ENCODE measurements at regions of chr9 and their contacts with region 1.

Region 1: DNA sequence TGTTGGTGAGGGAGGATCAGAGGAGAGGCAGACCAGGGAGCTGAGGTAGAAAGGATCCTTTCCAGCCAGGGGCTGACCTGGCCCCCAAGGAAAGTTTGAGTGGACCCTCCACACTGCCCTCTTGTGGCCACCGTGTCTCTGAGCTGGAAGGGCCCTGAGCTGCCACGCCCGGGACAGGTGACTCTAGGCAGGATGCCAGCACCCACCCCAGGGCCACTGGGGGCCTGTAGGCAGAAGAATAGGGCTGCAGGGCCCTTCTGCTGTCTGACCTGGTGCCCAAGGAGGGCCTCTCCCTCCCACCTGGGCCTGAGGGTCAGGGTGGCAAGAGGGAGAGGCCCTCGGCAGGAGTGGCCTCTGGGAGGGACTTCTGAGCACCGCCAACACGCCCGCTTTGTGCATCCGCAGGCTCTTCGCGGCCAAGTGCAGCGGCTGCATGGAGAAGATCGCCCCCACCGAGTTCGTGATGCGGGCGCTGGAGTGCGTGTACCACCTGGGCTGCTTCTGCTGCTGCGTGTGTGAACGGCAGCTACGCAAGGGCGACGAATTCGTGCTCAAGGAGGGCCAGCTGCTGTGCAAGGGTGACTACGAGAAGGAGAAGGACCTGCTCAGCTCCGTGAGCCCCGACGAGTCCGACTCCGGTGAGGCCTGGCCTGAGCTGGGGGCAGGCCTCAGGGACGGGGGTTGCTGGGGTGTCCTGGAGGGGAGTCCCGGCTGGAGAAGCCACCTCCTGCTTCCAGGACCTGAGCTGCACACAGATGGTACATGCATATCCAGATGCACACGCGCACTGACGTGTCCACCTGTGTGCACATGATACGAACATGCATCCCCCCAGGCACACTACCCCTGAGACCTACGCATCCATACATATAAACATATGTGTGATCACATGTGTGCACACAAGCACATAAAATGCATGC is 77.0 kb downstream of the LMX1B start:
- DNase-seq: no peak
- ATAC-seq: peak; percentile 82
- H3K4me3 ChIP-seq: no peak overlapping the region
- H3K27ac ChIP-seq: no peak overlapping the region
- H3K4me1 ChIP-seq: no peaks in the 10 kb centered on the region
- H3K27me3 ChIP-seq: no peaks in the 10 kb centered on the region
- CTCF ChIP-seq: peak; percentile 82

Region 2: DNA sequence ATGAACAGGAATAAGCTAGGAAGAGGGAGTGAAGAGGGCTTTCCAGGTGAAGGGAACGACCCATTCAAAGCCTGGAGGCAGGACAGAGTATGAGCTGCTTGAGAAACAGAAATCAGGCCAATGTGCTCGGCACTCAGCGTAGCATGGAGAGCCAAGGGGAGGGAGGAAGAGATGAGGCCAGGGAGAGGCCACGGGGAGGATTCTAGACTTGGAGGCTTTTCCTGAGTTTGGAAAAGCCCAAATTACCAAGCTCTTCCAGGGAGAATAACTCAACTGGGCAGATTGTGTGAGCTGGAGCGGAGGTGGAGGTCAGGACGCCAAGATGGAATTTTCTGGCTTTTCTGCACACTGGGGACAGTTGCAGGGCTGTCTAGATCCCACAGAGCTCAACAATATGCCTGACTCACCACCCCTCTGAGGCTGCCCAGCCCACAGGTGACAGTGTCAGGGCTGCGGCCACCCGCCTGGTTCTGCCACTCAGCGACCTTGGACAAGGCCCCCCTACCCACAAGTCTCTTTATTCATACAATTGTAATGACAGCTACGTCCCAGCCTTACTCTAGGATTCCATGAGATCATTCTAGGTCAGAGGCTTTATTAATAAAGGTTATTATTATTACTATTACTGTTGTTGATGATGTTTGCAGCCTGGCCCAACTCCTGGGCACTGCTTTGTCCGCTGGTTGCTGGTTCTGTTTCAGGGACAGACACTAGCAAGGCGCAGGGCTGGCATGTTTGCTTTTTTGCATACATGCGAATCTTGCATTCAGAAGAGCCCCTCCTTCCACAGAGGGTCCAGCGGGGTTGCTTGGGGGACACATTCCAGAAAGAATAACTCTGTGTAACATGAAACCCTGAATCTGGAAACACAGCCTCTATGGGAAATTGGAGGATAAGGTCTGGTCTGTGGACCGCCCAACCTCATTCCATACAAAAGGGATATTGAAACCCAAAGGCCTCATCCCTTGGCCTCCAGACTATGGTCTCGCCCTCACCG is 86.3 kb before region 1 on chr9:
- CTCF ChIA-PET with region 1: no interaction called
- POLR2A ChIA-PET with region 1: no interaction called
- in situ Hi-C with region 1: no loop called
- intact Hi-C with region 1: loop called (anchors 5 kb)
- DNase-seq: no peak
- ATAC-seq: no peak
- H3K4me3 ChIP-seq: no peak overlapping the region
- H3K27ac ChIP-seq: no peak overlapping the region
- H3K4me1 ChIP-seq: no peaks in the 10 kb centered on the region
- H3K27me3 ChIP-seq: no peaks in the 10 kb centered on the region
- CTCF ChIP-seq: no peak

Region 3: GRCh38 chr9:126662221-126662922 is 28.3 kb before region 1 on chr9:
- CTCF ChIA-PET with region 1: interaction called, 10 read pairs
- POLR2A ChIA-PET with region 1: no interaction called
- in situ Hi-C with region 1: no loop called
- intact Hi-C with region 1: no loop called
- DNase-seq: no peak
- ATAC-seq: peak; percentile 79
- H3K4me3 ChIP-seq: no peak overlapping the region
- H3K27ac ChIP-seq: no peak overlapping the region
- H3K4me1 ChIP-seq: no peaks in the 10 kb centered on the region
- H3K27me3 ChIP-seq: no peaks in the 10 kb centered on the region
- CTCF ChIP-seq: no peak

Region 4: DNA sequence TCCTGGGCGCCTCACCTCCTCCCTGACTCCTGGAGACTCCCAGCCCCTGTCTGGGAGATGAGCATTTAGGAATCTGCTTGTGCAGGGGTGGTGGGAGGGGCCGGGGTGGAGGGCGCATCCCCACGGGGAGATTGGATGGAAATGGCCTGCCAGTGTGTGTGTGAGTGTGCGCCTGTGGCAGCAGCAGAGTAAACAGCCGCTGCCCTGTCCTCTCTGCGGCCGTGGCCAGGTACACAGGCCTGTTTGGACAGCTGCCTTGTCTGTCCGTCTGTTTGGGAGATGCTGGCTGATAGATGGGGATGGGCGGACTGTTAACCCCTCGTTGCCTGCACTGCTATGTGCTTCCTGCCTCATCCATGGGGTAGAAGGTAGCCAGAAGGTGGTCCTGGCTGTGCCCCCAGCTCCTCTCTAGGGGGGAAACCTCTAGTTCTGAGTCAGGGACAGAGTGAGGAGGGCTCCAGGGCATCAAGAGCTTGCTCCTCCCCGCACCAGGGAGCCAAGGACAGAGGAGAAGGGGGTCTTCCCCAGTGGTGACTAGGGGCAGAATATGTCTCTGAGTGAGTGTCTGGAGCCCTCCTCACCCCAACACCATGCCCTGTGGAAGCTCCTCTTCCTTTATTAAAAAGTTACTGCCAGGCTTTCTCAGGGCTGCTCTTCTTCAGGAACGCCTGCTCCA is 16.9 kb before region 1 on chr9:
- CTCF ChIA-PET with region 1: interaction called, 3 read pairs
- POLR2A ChIA-PET with region 1: interaction called, 11 read pairs
- in situ Hi-C with region 1: no loop called
- intact Hi-C with region 1: no loop called
- DNase-seq: no peak
- ATAC-seq: peak; percentile 44
- H3K4me3 ChIP-seq: no peak overlapping the region
- H3K27ac ChIP-seq: no peak overlapping the region
- H3K4me1 ChIP-seq: no peaks in the 10 kb centered on the region
- H3K27me3 ChIP-seq: no peaks in the 10 kb centered on the region
- CTCF ChIP-seq: no peak

Region 5: GRCh38 chr9:126830827-126831226 is 140.1 kb after region 1 on chr9:
- CTCF ChIA-PET with region 1: no interaction called
- POLR2A ChIA-PET with region 1: no interaction called
- in situ Hi-C with region 1: no loop called
- intact Hi-C with region 1: no loop called
- DNase-seq: no peak
- ATAC-seq: no peak
- H3K4me3 ChIP-seq: no peak overlapping the region
- H3K27ac ChIP-seq: no peak overlapping the region
- H3K4me1 ChIP-seq: no peaks in the 10 kb centered on the region
- H3K27me3 ChIP-seq: no peaks in the 10 kb centered on the region
- CTCF ChIP-seq: no peak

Measured in Panc1 (cell line).